IMR-90 (cell line): ENCODE measurements at regions of chr12 and their contacts with region 1.

Region 1: DNA sequence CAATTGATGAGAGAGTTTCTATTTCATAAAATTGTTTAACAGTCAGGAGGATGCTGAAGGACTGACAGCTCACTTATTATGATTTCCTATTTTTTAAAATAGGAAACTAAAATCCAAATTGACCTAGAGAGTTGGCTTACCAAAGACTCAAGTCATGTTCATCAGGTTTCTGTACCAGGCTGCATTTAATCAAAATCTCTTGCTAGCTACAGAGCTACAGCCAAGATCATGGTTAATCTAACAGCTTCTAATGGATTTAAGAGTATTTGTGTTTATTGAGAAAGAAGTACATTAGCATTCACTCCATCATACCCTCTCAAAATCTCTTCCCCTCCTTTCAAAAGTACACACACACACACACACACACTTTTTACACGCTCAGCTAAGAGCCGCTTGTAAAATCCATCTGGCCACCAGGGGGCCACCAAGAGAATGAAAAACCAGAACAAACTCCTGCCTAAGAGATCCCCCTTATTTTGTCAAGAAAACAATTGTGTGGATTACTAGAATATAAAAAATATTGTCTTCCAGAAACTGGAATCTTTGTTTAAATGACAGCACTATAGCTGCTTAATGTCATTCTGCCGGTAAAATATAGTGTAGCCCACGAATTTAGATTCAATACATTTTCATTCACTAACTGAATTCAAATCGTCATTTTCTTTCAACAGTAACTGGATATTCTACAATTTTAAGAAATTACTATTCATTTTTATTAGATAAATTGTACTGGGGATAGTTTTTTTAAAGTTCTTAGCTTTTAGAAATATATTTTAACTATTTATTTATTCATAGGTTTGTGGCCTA is 334.0 kb downstream of the BTG1 start:
- DNase-seq: peak; percentile 72
- ATAC-seq: peak; percentile 79
- H3K4me3 ChIP-seq: no peak overlapping the region
- H3K27ac ChIP-seq: no peak overlapping the region
- H3K4me1 ChIP-seq: no peaks in the 10 kb centered on the region
- H3K27me3 ChIP-seq: no peaks in the 10 kb centered on the region
- CTCF ChIP-seq: peak; percentile 69
- POLR2A ChIP-seq: no peak
- RAD21 ChIP-seq: peak; percentile 74

Region 2: GRCh38 chr12:91382081-91382543 is 429.6 kb before region 1 on chr12:
- CTCF ChIA-PET with region 1: interaction called, 5 read pairs
- POLR2A ChIA-PET with region 1: no interaction called
- dilution Hi-C with region 1: no loop called
- in situ Hi-C with region 1: no loop called
- intact Hi-C with region 1: loop called (anchors 2 kb)
- DNase-seq: peak; percentile 80
- ATAC-seq: peak; percentile 67
- H3K4me3 ChIP-seq: peak overlapping the region; percentile 77
- H3K27ac ChIP-seq: 0 out of 2 replicates have a peak overlapping the region, but pooled peaks have one; percentile 71
- H3K4me1 ChIP-seq: peaks cover 6% of the 10 kb centered on the region
- H3K27me3 ChIP-seq: peaks cover 5% of the 10 kb centered on the region
- CTCF ChIP-seq: peak; percentile 90
- POLR2A ChIP-seq: 0 out of 2 replicates have a peak, but pooled peaks have one; percentile 23
- RAD21 ChIP-seq: peak; percentile 91

Region 3: DNA sequence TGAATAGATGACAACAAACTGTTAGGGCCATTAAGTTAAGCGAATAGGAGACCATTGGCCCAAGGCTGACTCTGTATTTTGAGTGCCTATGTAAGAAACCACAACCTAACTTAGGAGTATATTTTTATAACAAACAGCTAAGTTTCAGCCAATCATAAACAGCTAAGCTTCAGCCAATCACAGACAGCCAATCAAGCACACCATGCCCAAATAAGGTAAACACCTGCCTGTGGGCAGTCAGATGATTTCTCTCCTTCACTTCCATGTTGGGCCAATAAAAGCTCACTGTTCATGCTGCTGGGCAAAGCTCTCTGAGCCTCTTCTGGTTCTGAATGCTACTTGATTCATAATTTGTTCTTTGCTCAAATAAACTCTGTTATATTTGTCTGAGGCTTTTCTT is 10.6 kb before region 1 on chr12:
- CTCF ChIA-PET with region 1: interaction called, 12 read pairs
- POLR2A ChIA-PET with region 1: no interaction called
- dilution Hi-C with region 1: no loop called
- in situ Hi-C with region 1: no loop called
- intact Hi-C with region 1: no loop called
- DNase-seq: no peak
- ATAC-seq: no peak
- H3K4me3 ChIP-seq: no peak overlapping the region
- H3K27ac ChIP-seq: no peak overlapping the region
- H3K4me1 ChIP-seq: no peaks in the 10 kb centered on the region; the same call in 1 of the 2 replicates
- H3K27me3 ChIP-seq: no peaks in the 10 kb centered on the region; the same call in 1 of the 2 replicates
- CTCF ChIP-seq: no peak
- POLR2A ChIP-seq: no peak
- RAD21 ChIP-seq: no peak

Region 4: GRCh38 chr12:91877022-91877421 is 65.3 kb after region 1 on chr12:
- CTCF ChIA-PET with region 1: no interaction called
- POLR2A ChIA-PET with region 1: no interaction called
- dilution Hi-C with region 1: no loop called
- in situ Hi-C with region 1: no loop called
- intact Hi-C with region 1: no loop called
- DNase-seq: peak; percentile 40
- ATAC-seq: no peak
- H3K4me3 ChIP-seq: no peak overlapping the region
- H3K27ac ChIP-seq: no peak overlapping the region
- H3K4me1 ChIP-seq: no peaks in the 10 kb centered on the region
- H3K27me3 ChIP-seq: no peaks in the 10 kb centered on the region
- CTCF ChIP-seq: no peak
- POLR2A ChIP-seq: no peak
- RAD21 ChIP-seq: no peak

Region 5: GRCh38 chr12:92136965-92137721 is 325.5 kb after region 1 on chr12:
- CTCF ChIA-PET with region 1: interaction called, 4 read pairs
- POLR2A ChIA-PET with region 1: interaction called, 5 read pairs
- dilution Hi-C with region 1: no loop called
- in situ Hi-C with region 1: loop called (anchors 5 kb)
- intact Hi-C with region 1: no loop called
- DNase-seq: peak; percentile 97
- ATAC-seq: peak; percentile 77
- H3K4me3 ChIP-seq: no peak overlapping the region
- H3K27ac ChIP-seq: peak overlapping the region; percentile 97
- H3K4me1 ChIP-seq: peaks cover 19% of the 10 kb centered on the region
- H3K27me3 ChIP-seq: no peaks in the 10 kb centered on the region
- CTCF ChIP-seq: no peak
- POLR2A ChIP-seq: peak; percentile 56
- RAD21 ChIP-seq: peak; percentile 11; the same call in 1 of the 2 replicates

Region 6: DNA sequence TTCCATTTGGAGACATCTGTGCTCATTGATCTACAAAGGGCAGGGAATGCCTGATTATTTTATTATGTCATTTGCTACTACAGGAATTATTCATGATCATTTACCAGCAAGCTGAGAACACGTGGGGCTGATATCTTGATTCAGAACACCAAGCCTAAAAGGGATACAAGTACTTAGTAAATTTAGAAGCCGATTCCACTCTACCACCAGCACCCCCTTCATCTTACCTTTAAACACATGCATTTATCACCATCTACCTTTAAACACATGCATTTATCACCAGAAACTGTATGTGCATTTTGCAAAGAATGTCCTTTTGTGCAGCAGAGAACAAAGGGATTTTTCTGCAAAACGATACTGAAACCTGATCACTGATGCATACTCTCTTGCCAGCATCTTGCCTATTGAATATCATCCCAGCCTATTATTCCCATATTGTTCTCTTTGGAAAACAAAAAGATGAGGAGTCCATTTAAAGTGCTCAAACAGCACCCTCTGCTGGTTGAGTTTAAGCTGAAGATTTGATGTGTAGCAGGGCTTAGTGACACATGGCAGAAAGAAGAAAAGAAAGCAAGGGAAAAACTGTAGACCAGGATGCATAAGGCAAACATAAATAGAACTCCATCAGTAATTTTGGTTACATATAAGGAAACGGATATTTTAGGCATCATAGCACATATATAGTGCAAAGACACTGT is 758.5 kb after region 1 on chr12:
- CTCF ChIA-PET with region 1: no interaction called
- POLR2A ChIA-PET with region 1: no interaction called
- dilution Hi-C with region 1: no loop called
- in situ Hi-C with region 1: loop called (anchors 10 kb)
- intact Hi-C with region 1: loop called (anchors 2 kb)
- DNase-seq: peak; percentile 86
- ATAC-seq: peak; percentile 65
- H3K4me3 ChIP-seq: no peak overlapping the region
- H3K27ac ChIP-seq: no peak overlapping the region
- H3K4me1 ChIP-seq: no peaks in the 10 kb centered on the region
- H3K27me3 ChIP-seq: no peaks in the 10 kb centered on the region
- CTCF ChIP-seq: peak; percentile 77
- POLR2A ChIP-seq: no peak
- RAD21 ChIP-seq: peak; percentile 87